Activated T-helper 1 cell treated with anti-CD3 and anti-CD28 coated beads, Interleukin-12 subunit alpha, Interleukin-12 subunit beta, Interleukin-2, Interleukin-4 antibody, amounts not matched to agents 30 ng/mL and 10 ng/mL and 1 ng/mL, durations not matched to agents 14 hours and 24 hours and 36 hours (primary cell): ENCODE measurements at regions of chr3 and their contacts with region 1.

Region 1: DNA sequence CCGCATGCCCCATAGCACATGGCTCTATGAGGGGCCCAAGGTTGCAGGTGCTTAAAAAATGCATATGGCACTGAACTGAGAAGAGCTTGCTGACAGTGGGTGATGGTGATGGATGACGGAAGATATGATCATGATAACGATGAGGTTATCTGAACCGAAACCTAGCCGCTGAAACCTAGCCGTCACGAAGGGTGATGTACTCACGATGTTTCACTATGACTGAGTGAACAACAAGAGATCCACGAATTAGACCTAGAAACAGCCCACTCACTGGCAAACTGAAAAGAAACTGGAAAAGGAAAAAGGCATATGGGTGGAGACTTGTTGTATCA is 57.6 kb upstream of the BCL6 start:
- DNase-seq: peak; percentile 78
- H3K4me3 Mint-ChIP-seq: peak overlapping the region; percentile 65
- H3K27ac Mint-ChIP-seq: peak overlapping the region; percentile 90
- H3K4me1 Mint-ChIP-seq: peaks cover 96% of the 10 kb centered on the region
- H3K27me3 Mint-ChIP-seq: no peaks in the 10 kb centered on the region

Region 2: DNA sequence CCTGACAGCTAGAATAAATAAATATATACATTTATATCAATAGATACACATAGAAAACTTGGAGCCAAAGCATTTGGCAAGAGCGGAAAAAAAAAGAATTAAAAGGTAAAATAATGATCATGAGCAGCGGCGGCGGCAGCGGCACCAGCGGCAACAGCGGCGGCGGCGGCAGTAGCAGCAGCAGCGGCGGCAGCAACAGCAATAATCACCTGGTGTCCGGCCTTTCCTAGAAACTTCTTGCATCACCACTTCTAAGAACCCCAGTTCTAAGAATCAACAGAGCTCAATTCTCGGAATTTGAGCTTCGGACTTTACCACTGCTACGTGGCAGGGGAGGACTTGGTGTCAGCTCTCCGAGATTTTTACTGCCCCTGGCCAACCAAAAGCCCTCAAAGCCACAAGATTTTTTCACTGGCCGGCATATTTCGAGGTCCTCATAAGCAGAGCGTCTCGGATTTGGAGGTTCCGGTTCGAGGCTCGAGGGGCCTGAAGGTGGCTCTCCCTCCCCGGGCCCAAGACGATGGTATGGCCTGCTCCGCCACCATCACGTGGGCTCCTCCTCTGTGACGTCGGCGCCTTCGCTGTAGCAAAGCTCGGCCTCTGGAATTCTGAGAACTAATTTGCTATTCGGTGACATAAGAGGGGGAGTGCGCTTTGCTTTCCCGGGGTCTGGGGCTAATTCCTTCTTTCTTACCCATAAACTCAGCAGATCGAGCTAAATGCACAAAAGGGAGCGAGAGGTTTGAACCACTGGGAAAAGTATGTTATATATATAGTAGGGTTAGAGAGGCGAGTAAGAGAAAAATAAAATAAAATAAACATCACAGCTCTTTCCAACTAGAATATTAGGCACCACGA is 57.5 kb before region 1 on chr3 and contains the start of gene BCL6:
- intact Hi-C with region 1: loop called (anchors 1 kb)
- DNase-seq: peak; percentile 88
- H3K4me3 Mint-ChIP-seq: peak within 1 kb of the TSS; percentile 96
- H3K27ac Mint-ChIP-seq: peak within 1 kb of the TSS; percentile 98
- H3K4me1 Mint-ChIP-seq: peaks cover 73% of the 10 kb centered on the region
- H3K27me3 Mint-ChIP-seq: no peaks in the 10 kb centered on the region
- total RNA-seq, gene BCL6: 38.8 and 42.1 TPM in 2 replicates

Region 3: DNA sequence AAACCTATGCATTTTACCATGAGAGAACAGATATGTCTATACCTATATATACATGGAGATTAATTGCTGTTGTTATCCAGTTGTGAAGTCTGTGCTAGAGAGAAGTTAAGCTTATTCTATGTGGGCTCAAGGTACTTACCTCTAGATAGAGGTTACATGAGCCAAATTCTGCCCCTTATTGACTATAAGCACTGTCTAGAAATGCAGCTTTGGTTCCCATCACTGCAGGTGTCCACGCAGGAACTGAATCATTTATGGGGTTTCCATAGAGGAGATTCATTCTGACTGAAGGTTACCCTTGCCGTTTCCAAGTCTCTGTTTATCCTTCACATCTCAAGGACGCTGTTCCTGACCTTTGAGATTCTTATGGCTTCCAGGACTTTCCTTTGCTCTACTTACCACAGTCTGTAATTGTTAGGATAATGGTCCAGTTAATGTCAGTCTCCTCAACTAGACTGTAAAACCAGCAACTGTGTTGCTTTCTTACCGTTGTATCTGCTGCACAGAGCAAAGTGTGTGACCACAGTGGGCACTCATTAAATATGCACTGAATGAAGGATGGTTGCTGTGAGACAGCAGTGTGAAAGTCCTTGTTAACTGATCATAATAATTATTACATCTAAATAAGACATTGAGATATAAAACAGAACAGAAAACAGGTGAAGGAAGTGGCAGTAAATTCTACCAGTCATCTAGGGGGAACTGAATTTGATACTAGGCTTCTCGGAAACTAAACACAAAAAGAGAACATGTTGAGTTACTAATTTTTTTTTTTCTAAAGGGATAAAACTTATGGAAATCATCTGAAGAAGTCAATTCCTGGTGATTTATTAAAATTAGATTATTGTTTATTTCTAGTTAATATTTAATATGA is 13.7 kb before region 1 on chr3:
- intact Hi-C with region 1: loop called (anchors 1 kb)
- DNase-seq: no peak
- H3K4me3 Mint-ChIP-seq: no peak overlapping the region
- H3K27ac Mint-ChIP-seq: peak overlapping the region; percentile 56
- H3K4me1 Mint-ChIP-seq: peaks cover 22% of the 10 kb centered on the region
- H3K27me3 Mint-ChIP-seq: no peaks in the 10 kb centered on the region

Region 4: DNA sequence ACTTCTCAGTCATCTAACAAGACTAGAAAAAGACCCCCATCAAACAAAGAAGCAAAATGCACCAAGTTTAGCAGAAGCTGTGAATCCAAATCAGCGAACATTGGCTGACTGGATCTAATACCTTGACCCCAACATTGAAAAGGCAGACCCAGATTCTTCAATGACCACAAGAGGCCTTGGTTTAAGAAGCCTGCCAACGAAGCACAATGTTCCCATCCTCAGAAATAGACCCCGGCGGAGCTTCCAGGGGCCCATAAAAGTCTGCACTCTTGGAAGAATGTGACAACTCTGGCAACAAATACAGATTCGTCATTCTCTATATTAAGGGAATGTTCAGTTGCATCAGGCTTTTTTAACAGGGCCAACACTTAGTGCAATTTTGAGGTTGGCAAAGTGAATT is 55.1 kb after region 1 on chr3:
- intact Hi-C with region 1: no loop called
- DNase-seq: no peak
- H3K4me3 Mint-ChIP-seq: no peak overlapping the region
- H3K27ac Mint-ChIP-seq: no peak overlapping the region
- H3K4me1 Mint-ChIP-seq: peaks cover 8% of the 10 kb centered on the region
- H3K27me3 Mint-ChIP-seq: no peaks in the 10 kb centered on the region

Region 5: DNA sequence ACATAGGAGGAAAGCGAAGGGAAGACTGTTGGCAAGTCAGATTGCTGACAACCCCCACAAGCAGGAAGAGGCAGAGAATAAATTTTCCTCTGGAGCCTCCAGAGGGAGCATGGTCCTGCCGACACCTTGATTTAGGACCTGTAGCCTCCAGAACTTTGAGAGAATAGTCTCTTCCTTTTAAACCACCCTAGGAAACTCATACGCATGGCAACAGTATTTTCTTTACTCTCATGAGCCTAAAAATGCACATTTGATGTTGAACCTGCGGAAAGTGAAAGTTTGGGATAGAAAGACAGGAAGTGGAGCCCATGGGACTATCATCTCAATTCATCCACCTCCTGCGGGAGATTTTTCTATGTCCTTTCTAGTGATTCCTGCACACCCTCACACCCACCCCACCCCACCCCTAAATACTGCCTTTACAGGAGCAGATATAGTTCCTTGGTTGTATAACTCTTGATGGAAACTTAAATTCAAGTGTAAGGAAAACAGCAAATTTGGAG is 234.4 kb after region 1 on chr3:
- intact Hi-C with region 1: no loop called
- DNase-seq: no peak
- H3K4me3 Mint-ChIP-seq: no peak overlapping the region
- H3K27ac Mint-ChIP-seq: no peak overlapping the region
- H3K4me1 Mint-ChIP-seq: peaks cover 10% of the 10 kb centered on the region
- H3K27me3 Mint-ChIP-seq: peaks cover 5% of the 10 kb centered on the region

Region 6: DNA sequence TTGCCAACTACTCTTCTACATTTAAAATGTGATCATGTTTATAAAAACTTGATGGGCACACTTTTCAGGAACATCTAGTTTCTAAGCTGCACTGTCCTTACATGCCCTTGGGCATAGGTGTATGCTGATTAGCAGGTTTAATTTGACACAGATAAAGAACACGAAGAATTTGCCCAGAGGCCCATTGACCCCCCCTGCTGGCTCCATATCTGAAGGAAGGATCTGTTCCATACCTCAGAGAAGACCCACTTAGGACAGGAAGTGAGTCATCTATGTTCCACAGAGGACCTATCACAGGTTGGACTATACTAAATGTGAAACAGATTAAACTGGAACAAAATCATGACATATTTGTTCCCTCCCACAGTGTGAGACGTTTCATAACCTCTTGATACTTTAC is 258.2 kb after region 1 on chr3:
- intact Hi-C with region 1: loop called (anchors 1 kb)
- DNase-seq: peak; percentile 38
- H3K4me3 Mint-ChIP-seq: peak overlapping the region; percentile 61
- H3K27ac Mint-ChIP-seq: peak overlapping the region; percentile 87
- H3K4me1 Mint-ChIP-seq: peaks cover 53% of the 10 kb centered on the region
- H3K27me3 Mint-ChIP-seq: no peaks in the 10 kb centered on the region

Region 7: GRCh38 chr3:188294823-188295487 is 492.1 kb after region 1 on chr3:
- intact Hi-C with region 1: loop called (anchors 2 kb)
- DNase-seq: no peak
- H3K4me3 Mint-ChIP-seq: no peak overlapping the region
- H3K27ac Mint-ChIP-seq: peak overlapping the region; percentile 33
- H3K4me1 Mint-ChIP-seq: peaks cover 86% of the 10 kb centered on the region
- H3K27me3 Mint-ChIP-seq: no peaks in the 10 kb centered on the region

Region 8: DNA sequence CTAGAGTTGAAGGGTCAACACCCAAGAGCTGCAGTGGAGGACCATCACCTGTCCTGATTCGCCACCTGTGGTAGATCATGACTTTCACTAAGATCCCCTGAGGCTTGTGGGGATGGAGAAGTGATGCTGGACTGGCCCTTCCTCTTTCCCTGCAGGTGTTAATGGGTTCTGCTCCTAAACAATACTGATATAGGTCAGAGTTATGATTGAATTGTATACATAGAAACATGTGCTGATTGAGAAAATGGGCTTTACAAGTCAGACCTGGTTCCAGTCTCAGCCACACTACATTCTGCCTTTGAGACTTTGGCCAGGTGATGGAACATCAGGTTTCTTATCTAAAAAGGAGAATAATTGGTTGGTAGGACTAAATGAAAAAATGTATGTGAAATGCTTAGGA is 950.0 kb after region 1 on chr3:
- intact Hi-C with region 1: loop called (anchors 1 kb)
- DNase-seq: no peak
- H3K4me3 Mint-ChIP-seq: no peak overlapping the region
- H3K27ac Mint-ChIP-seq: peak overlapping the region; percentile 60
- H3K4me1 Mint-ChIP-seq: peaks cover 33% of the 10 kb centered on the region
- H3K27me3 Mint-ChIP-seq: peaks cover 2% of the 10 kb centered on the region

Region 9: GRCh38 chr3:189132231-189132707 is 1329.4 kb after region 1 on chr3:
- intact Hi-C with region 1: loop called (anchors 2 kb)
- DNase-seq: peak; percentile 75
- H3K4me3 Mint-ChIP-seq: peak overlapping the region; percentile 69
- H3K27ac Mint-ChIP-seq: peak overlapping the region; percentile 76
- H3K4me1 Mint-ChIP-seq: peaks cover 28% of the 10 kb centered on the region
- H3K27me3 Mint-ChIP-seq: no peaks in the 10 kb centered on the region